CD8-positive, alpha-beta T cell (primary cell): ENCODE measurements at regions of chr9 and their contacts with region 1.

Region 1: DNA sequence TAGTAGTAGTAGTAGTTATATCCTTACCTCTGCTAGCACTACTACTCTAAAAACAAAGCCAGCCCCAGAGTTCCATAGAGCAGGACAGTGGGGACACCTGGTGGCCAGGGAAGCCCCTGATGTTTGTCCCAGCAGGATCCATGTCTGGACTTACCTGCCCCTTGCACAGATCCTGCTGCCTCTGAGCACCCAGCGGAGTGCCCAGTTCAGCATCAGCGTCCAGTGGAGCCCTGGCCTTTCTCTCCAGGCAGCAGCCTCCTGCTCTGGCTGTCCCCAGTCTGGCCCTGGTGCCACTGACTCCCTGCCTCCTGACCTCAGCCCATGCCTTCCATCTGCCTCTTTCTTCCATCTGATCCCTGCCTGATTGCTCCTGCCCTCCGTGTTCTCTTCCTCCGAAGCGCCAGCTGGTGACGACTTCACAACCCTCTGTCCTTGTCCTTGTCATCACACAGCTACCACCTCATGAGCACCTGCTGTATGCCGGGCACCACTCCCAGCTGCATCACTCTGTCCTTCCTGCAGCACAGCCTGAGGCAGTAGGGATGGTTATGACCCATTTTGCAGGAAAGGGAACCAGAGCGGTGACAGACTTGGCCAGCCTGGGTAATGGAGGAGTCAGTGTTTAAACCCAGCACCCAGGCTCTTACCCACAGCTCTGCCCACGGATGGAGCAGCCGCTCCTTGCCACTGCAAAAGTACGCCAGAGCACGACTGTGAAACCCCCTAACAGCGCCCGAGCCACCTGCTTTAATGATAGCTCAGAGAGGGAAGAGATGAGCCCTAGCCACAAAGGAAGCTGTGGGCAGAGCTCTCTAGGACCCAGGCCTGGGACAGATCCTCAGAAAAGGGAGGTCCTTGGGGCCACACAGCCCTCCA is 11.5 kb downstream of the SARDH start:
- DNase-seq: peak; percentile 41 to 80 (median 67)
- ATAC-seq: peak; percentile 88
- H3K4me3 ChIP-seq: no peak overlapping the region
- H3K4me3 Mint-ChIP-seq: no peak overlapping the region
- H3K27ac ChIP-seq: no peak overlapping the region
- H3K27ac Mint-ChIP-seq: no peak overlapping the region
- H3K4me1 ChIP-seq: peaks cover 5% of the 10 kb centered on the region
- H3K4me1 Mint-ChIP-seq: peaks cover 8% of the 10 kb centered on the region
- H3K27me3 ChIP-seq: no peaks in the 10 kb centered on the region
- H3K27me3 Mint-ChIP-seq: peaks cover 5% of the 10 kb centered on the region
- CTCF ChIP-seq: peak; percentile 60

Region 2: DNA sequence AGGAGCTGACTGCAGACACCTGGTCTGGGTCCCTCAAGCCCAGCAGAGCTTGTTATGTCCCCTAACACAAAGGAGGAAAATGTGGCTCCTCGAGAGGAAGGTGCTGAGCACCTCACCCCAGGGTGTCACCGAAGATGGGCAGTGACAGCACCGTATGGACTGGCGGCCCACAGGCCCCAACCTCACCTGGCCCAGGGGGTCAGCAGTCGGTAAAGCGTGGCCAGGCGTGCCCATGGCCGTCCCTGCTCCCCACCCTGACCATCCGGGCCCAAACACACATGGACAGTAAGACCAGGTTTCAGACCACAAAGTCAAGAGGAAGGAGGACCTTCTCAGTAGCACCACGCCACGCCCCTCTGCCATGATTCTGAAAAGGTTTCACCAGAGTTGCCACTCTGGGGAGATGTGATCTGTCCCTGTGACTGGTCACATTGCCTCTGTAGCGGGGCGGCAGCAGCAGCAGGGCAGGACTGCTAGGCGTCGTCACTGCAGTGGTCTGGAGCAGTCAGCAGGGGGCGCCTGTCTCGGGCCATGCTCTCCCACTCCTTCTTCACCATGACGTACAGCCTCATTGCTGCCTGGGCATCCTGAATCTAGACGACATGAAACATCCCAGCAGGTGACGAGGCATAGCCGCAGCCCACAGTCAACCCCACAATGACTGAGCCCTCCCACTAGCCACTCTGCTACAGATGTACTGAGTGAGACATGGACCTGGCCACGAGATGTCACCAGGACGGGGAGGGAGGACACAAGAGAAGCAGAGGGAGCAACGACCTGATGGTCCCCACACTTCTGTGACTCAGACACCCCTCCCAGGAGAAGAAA is 319.9 kb before region 1 on chr9:
- CTCF ChIA-PET with region 1: interaction called, 3 read pairs
- POLR2A ChIA-PET with region 1: no interaction called
- intact Hi-C with region 1: loop called (anchors 2 to 5 kb)
- DNase-seq: peak; percentile 62 to 87 (median 83)
- ATAC-seq: peak; percentile 91
- H3K4me3 ChIP-seq: no peak overlapping the region
- H3K4me3 Mint-ChIP-seq: no peak overlapping the region
- H3K27ac ChIP-seq: peak overlapping the region in 1 of 2 experiments; percentile 58
- H3K27ac Mint-ChIP-seq: peak overlapping the region; percentile 64
- H3K4me1 ChIP-seq: peaks cover 3% of the 10 kb centered on the region
- H3K4me1 Mint-ChIP-seq: peaks cover 11% of the 10 kb centered on the region
- H3K27me3 ChIP-seq: no peaks in the 10 kb centered on the region
- H3K27me3 Mint-ChIP-seq: no peaks in the 10 kb centered on the region
- CTCF ChIP-seq: peak; percentile 89

Region 3: GRCh38 chr9:133532937-133533668 is 193.5 kb before region 1 on chr9:
- CTCF ChIA-PET with region 1: interaction called, 8 read pairs
- POLR2A ChIA-PET with region 1: no interaction called
- intact Hi-C with region 1: loop called (anchors 1 kb)
- DNase-seq: peak; percentile 25 to 82 (median 67)
- ATAC-seq: peak; percentile 78
- H3K4me3 ChIP-seq: no peak overlapping the region
- H3K4me3 Mint-ChIP-seq: peak overlapping the region; percentile 42
- H3K27ac ChIP-seq: no peak overlapping the region
- H3K27ac Mint-ChIP-seq: peak overlapping the region; percentile 49
- H3K4me1 ChIP-seq: peaks cover 26% of the 10 kb centered on the region
- H3K4me1 Mint-ChIP-seq: peaks cover 13% of the 10 kb centered on the region
- H3K27me3 ChIP-seq: peaks cover 0 to 2% of the 10 kb centered on the region in 2 experiments
- H3K27me3 Mint-ChIP-seq: peaks cover 10% of the 10 kb centered on the region
- CTCF ChIP-seq: peak; percentile 48

Region 4: GRCh38 chr9:133604214-133604613 is 122.4 kb before region 1 on chr9:
- CTCF ChIA-PET with region 1: interaction called, 27 read pairs
- POLR2A ChIA-PET with region 1: no interaction called
- intact Hi-C with region 1: loop called (anchors 1 kb)
- DNase-seq: peak in 8 of 9 experiments; percentile 27 to 75 (median 56)
- ATAC-seq: peak; percentile 85
- H3K4me3 ChIP-seq: no peak overlapping the region
- H3K4me3 Mint-ChIP-seq: no peak overlapping the region
- H3K27ac ChIP-seq: no peak overlapping the region
- H3K27ac Mint-ChIP-seq: peak overlapping the region; percentile 3
- H3K4me1 ChIP-seq: peaks cover 11% of the 10 kb centered on the region
- H3K4me1 Mint-ChIP-seq: peaks cover 10% of the 10 kb centered on the region
- H3K27me3 ChIP-seq: peaks cover 0 to 4% of the 10 kb centered on the region in 2 experiments
- H3K27me3 Mint-ChIP-seq: peaks cover 19% of the 10 kb centered on the region
- CTCF ChIP-seq: peak; percentile 52

Region 5: GRCh38 chr9:133609311-133610098 is 117.1 kb before region 1 on chr9 and contains the start of gene FAM163B:
- CTCF ChIA-PET with region 1: interaction called, 27 read pairs
- POLR2A ChIA-PET with region 1: no interaction called
- intact Hi-C with region 1: loop called (anchors 1 kb)
- DNase-seq: peak in 8 of 9 experiments; percentile 7 to 73 (median 37)
- ATAC-seq: peak; percentile 54
- H3K4me3 ChIP-seq: no peak within 1 kb of the TSS
- H3K4me3 Mint-ChIP-seq: no peak within 1 kb of the TSS
- H3K27ac ChIP-seq: no peak within 1 kb of the TSS
- H3K27ac Mint-ChIP-seq: no peak within 1 kb of the TSS
- H3K4me1 ChIP-seq: peaks cover 7% of the 10 kb centered on the region
- H3K4me1 Mint-ChIP-seq: peaks cover 9% of the 10 kb centered on the region
- H3K27me3 ChIP-seq: peaks cover 0 to 4% of the 10 kb centered on the region in 2 experiments
- H3K27me3 Mint-ChIP-seq: peaks cover 40% of the 10 kb centered on the region
- CTCF ChIP-seq: no peak
- total RNA-seq, gene FAM163B: not detected

Region 6: DNA sequence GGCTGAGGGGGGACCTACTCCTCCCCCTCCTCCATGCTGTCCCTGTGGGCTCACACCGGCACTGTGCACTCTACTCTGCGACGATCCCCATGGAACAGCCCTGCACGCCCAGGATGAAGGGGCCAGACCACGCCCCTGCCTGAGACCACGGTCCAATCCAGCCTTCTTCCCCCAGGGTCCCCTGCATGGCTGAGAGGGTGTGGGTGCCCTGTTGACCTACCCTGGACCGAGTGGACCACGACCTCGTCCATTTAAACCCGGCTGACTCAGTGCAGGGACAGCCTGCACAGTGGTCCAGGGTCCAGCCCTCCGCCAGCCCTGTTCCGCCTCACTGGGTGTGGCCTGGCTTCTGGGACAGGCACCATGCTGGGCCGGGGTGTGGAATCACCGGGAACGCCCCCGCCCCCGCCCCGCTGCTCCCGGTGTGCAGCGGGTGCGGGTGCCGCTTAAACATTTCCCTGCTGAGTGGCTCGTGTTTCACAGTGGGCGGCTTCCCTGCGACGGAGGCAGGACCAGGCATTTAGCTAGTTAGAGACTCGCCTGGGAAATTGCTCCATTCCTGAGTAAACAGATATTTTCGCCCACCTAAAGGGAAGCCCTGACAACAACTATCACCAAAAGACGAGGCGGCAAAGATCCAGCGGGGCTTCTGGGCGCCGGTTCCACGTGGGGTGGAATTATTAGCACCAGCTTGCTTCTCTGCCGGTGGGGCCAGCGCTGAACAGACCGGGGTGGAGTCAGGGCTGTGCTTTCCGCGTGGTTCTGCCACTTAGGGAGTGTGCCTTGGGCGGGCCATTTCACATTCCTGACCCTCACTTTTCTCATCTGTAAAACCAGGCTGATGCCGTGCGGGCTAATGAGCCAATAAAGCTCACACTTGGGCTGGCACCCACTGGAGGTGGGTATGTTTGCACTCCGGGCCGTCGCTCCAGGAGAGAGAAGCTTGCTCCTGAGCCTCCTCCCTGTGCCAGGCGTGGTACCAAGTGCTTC is 67.9 kb before region 1 on chr9:
- CTCF ChIA-PET with region 1: interaction called, 25 read pairs
- POLR2A ChIA-PET with region 1: interaction called, 3 read pairs
- intact Hi-C with region 1: loop called (anchors 1 to 2 kb)
- DNase-seq: no peak
- ATAC-seq: no peak
- H3K4me3 ChIP-seq: no peak overlapping the region
- H3K4me3 Mint-ChIP-seq: peak overlapping the region; percentile 54
- H3K27ac ChIP-seq: no peak overlapping the region
- H3K27ac Mint-ChIP-seq: peak overlapping the region; percentile 84
- H3K4me1 ChIP-seq: peaks cover 23% of the 10 kb centered on the region
- H3K4me1 Mint-ChIP-seq: peaks cover 41% of the 10 kb centered on the region
- H3K27me3 ChIP-seq: peaks cover 5 to 9% of the 10 kb centered on the region in 2 experiments
- H3K27me3 Mint-ChIP-seq: peaks cover 40% of the 10 kb centered on the region
- CTCF ChIP-seq: no peak

Region 7: DNA sequence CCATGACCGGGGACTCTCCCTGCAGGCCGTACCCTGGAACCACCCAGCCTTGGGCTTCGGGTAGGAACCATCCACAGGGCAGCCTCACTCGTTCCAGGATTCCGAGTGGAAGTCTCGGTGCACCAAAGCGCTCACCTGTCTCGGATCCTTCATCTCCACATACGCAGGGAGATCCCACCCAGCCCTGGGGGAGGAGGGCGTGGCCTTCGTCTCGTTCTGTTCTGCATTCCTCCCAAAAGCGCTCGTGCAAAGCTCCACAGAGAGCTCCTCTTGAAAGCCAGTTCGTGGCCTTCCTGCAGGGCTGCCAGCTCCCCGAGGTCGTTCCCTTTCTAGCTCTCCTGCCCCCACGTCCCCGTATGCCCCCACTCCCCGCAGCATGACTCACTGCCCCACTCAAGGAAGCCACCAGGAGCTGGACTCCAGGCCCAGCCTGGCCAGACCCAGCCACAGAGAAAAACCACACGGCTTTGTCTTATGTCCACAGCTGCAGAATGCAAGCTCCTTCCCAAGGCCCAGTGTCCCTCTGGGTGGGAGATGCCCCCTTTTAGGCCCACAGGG is 76.5 kb after region 1 on chr9:
- CTCF ChIA-PET with region 1: no interaction called
- POLR2A ChIA-PET with region 1: no interaction called
- intact Hi-C with region 1: no loop called
- DNase-seq: no peak
- ATAC-seq: no peak
- H3K4me3 ChIP-seq: no peak overlapping the region
- H3K4me3 Mint-ChIP-seq: no peak overlapping the region
- H3K27ac ChIP-seq: no peak overlapping the region
- H3K27ac Mint-ChIP-seq: no peak overlapping the region
- H3K4me1 ChIP-seq: no peaks in the 10 kb centered on the region
- H3K4me1 Mint-ChIP-seq: no peaks in the 10 kb centered on the region
- H3K27me3 ChIP-seq: no peaks in the 10 kb centered on the region
- H3K27me3 Mint-ChIP-seq: no peaks in the 10 kb centered on the region
- CTCF ChIP-seq: no peak

Region 8: GRCh38 chr9:133821601-133822429 is 95.2 kb after region 1 on chr9:
- CTCF ChIA-PET with region 1: no interaction called
- POLR2A ChIA-PET with region 1: no interaction called
- intact Hi-C with region 1: no loop called
- DNase-seq: no peak
- ATAC-seq: no peak
- H3K4me3 ChIP-seq: no peak overlapping the region
- H3K4me3 Mint-ChIP-seq: no peak overlapping the region
- H3K27ac ChIP-seq: no peak overlapping the region
- H3K27ac Mint-ChIP-seq: no peak overlapping the region
- H3K4me1 ChIP-seq: no peaks in the 10 kb centered on the region
- H3K4me1 Mint-ChIP-seq: no peaks in the 10 kb centered on the region
- H3K27me3 ChIP-seq: no peaks in the 10 kb centered on the region
- H3K27me3 Mint-ChIP-seq: no peaks in the 10 kb centered on the region
- CTCF ChIP-seq: no peak

Region 9: DNA sequence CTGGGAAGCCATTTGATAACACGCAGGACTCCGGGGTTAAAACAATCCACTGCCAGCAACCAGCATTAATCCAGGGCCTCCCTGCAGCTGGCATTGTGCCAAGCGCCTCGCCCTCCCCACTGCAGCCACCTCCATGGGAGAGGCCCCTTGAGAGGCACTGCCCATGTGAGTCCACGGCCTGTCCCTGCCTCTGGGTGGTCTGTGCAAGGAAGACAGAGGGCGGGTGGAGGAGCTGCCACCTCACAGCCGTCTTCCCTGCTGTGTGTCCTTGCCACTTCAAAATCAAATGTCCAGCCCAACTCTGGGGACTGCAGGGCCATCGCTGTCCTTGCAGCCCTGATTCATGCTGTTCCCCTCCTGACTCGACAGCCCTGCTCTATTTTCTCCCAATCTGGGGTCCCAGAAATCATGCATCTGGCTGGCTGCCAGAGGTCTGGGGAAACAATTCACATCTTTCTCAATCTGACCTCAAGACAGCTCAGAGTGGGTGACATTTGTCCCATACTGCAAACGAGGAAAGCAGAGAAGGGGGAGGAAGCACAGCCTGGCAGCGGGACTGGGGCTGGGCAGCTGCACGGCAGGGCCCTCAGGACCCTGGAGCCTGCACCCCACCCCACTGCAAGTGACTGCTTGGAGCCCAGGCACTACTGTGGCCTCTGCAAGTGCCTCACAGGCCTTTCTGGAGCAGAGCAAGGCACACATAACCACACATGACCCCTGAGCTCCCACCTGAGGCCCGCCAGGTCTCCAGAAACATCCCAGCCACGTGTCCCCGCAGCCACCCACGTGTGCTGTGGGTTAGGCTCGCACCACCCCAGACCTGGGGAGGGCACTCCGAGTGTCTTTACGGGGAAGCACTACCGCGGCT is 314.4 kb after region 1 on chr9:
- CTCF ChIA-PET with region 1: no interaction called
- POLR2A ChIA-PET with region 1: no interaction called
- intact Hi-C with region 1: no loop called
- DNase-seq: no peak
- ATAC-seq: no peak
- H3K4me3 ChIP-seq: no peak overlapping the region
- H3K4me3 Mint-ChIP-seq: no peak overlapping the region
- H3K27ac ChIP-seq: no peak overlapping the region
- H3K27ac Mint-ChIP-seq: no peak overlapping the region
- H3K4me1 ChIP-seq: no peaks in the 10 kb centered on the region
- H3K4me1 Mint-ChIP-seq: no peaks in the 10 kb centered on the region
- H3K27me3 ChIP-seq: no peaks in the 10 kb centered on the region
- H3K27me3 Mint-ChIP-seq: no peaks in the 10 kb centered on the region
- CTCF ChIP-seq: no peak